ENCODE measurements at regions of chr22 and their contacts with region 1.

Region 1: DNA sequence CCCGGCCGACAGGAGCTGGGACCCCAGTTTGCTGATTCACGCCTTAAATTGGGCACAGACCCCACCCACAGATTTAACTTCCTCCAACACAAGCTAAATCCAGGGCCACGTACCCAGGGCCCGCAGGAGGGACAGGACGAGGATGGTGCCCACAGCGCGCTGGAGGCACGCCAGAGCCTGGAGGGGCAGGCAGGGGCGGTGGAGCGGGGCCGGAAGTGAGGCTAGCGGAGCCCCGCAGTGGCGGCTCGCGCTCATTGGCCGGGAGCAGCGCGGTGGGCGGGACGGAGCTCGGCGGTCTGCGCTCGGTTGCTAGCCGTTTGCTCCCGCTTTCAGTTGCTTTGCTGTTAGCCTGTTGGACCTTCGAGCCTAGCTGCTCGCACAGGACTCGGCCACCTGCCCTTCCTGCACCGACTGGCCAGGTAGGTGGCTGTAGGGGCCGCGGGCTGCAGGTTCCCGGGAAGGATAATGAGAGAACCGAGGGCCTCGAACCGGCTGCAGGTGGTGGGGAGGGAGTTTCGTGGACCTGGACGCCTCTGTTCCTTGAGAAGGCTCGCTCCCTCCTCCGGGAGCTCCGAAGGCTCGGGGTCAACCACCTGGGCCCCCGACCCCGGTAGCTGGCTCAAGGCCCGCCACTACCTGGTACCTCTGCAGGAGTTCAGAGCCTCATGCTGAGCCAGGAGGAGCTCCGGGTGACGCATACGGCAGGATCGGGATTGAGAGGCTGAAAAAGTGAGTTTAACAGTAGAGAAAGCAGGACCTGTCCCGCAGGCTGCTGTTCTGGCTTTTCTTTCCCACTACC is at the start of gene CCDC134:
- DNase-seq: peak; percentile 93
- ATAC-seq: peak; percentile 98
- H3K4me3 Mint-ChIP-seq: peak within 1 kb of the TSS; percentile 89
- H3K27ac Mint-ChIP-seq: peak within 1 kb of the TSS; percentile 93
- H3K4me1 Mint-ChIP-seq: peaks cover 30% of the 10 kb centered on the region
- H3K27me3 Mint-ChIP-seq: no peaks in the 10 kb centered on the region
- CTCF ChIP-seq: no peak
- total RNA-seq, gene CCDC134: 15.2 to 15.9 TPM

Region 2: DNA sequence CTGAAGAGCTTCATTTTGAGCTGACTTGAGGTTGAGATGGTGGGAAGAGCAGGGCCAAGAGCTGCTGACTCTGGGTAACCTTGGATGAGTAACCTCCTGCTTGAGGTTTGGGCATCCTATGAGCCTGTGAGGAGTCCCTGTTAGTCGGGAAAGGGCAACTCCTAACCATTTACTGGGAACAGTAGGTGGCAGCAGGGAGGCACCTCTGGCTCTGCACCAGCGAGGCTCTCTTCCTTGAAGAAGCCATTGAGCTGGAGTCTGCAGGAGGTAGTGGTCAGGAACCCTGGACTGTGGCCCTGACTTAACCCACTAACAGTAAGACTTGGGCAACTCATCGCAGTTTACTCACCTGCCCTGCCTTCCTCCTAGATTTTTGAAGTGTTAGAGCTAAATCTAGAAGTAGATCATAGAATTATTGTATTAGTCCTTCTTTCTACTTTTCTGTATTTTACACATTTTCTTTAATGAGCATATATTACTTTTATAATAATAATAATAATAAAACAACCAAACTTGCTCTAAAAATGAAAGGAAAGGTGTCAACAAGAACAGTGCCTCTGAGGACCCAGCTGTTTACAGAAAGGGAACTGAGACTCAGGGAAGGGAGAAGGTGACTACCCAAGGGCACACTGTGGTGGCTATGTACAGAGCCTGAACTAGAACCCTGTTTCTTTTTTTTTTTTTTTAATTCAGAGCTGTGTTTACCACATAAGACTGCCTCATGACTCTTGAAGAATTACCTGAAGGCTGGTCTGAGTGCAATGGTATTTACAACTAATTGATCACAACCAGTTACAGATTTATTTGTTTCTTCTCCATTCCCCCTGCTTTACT is 53.8 kb before region 1 on chr22:
- CTCF ChIA-PET with region 1: interaction called, 22 read pairs
- POLR2A ChIA-PET with region 1: interaction called, 6 read pairs
- intact Hi-C with region 1: no loop called
- DNase-seq: peak; percentile 63
- ATAC-seq: peak; percentile 89
- H3K4me3 Mint-ChIP-seq: no peak overlapping the region
- H3K27ac Mint-ChIP-seq: no peak overlapping the region
- H3K4me1 Mint-ChIP-seq: peaks cover 6% of the 10 kb centered on the region
- H3K27me3 Mint-ChIP-seq: peaks cover 4% of the 10 kb centered on the region
- CTCF ChIP-seq: peak; percentile 54

Region 3: DNA sequence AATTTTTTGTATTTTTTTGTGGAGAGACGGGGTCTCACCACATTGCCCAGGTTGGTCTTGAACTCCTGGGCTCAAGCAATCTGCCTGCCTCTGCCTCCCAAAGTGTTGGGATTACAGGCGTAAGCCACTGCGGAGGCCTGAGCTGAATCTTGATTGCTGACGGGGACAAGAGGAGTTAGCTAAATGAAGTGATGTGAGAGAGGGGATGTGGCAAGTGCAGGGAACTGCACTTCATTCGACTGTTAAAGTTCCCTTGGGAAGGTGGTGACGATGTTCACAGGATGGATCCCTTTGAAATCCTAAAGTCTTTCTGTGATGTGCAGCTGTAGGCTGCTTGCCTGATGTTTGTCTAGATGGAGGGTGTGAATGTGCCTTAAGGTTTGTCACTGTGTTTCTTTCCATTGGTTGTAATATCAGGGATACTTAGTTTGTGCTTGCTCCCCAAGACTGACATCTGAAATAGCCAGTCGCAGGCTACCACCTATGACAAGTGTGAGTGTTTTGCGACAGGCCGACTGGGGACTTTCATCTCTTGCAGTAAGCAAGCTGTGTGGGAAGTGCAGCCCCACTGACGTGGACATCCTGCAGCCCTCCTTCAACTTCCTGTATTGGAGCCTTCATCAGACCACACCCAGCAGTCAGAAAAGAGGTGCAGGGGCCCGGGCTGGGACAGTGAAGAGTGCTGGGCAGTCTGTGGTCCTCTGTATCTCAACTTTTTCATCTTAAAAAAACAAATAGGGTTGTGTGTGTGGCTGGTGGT is 19.6 kb before region 1 on chr22:
- CTCF ChIA-PET with region 1: interaction called, 30 read pairs
- POLR2A ChIA-PET with region 1: interaction called, 85 read pairs
- intact Hi-C with region 1: no loop called
- DNase-seq: peak; percentile 98
- ATAC-seq: peak; percentile 94
- H3K4me3 Mint-ChIP-seq: peak overlapping the region; percentile 81
- H3K27ac Mint-ChIP-seq: peak overlapping the region; percentile 99
- H3K4me1 Mint-ChIP-seq: peaks cover 39% of the 10 kb centered on the region
- H3K27me3 Mint-ChIP-seq: no peaks in the 10 kb centered on the region
- CTCF ChIP-seq: no peak

Region 4: DNA sequence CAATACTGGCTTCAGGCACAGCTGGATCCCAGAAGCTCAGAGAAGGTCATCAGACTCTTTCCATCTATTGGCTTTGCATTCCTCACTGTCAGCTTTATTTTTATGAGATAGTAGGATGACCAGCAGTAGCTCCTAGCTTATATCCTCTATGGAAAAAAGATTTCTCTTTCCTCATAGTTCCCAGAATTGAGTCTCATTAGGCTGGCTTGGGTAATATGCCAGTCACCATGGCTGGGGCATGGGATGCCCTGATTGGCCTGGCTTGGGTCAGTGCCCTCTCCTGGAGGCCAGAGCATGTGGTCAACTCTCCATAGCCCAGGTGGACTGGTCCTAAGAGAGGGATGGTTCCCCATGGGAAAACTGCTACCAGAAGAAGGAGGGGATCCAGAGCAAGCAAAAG is 14.1 kb before region 1 on chr22:
- CTCF ChIA-PET with region 1: interaction called, 30 read pairs
- POLR2A ChIA-PET with region 1: interaction called, 85 read pairs
- intact Hi-C with region 1: no loop called
- DNase-seq: no peak
- ATAC-seq: no peak
- H3K4me3 Mint-ChIP-seq: no peak overlapping the region
- H3K27ac Mint-ChIP-seq: no peak overlapping the region
- H3K4me1 Mint-ChIP-seq: peaks cover 25% of the 10 kb centered on the region
- H3K27me3 Mint-ChIP-seq: no peaks in the 10 kb centered on the region
- CTCF ChIP-seq: no peak

Region 5: GRCh38 chr22:41841085-41841659 is 40.6 kb after region 1 on chr22:
- CTCF ChIA-PET with region 1: no interaction called
- POLR2A ChIA-PET with region 1: no interaction called
- intact Hi-C with region 1: no loop called
- DNase-seq: no peak
- ATAC-seq: no peak
- H3K4me3 Mint-ChIP-seq: no peak overlapping the region
- H3K27ac Mint-ChIP-seq: no peak overlapping the region
- H3K4me1 Mint-ChIP-seq: peaks cover 70% of the 10 kb centered on the region
- H3K27me3 Mint-ChIP-seq: no peaks in the 10 kb centered on the region
- CTCF ChIP-seq: no peak

Region 6: DNA sequence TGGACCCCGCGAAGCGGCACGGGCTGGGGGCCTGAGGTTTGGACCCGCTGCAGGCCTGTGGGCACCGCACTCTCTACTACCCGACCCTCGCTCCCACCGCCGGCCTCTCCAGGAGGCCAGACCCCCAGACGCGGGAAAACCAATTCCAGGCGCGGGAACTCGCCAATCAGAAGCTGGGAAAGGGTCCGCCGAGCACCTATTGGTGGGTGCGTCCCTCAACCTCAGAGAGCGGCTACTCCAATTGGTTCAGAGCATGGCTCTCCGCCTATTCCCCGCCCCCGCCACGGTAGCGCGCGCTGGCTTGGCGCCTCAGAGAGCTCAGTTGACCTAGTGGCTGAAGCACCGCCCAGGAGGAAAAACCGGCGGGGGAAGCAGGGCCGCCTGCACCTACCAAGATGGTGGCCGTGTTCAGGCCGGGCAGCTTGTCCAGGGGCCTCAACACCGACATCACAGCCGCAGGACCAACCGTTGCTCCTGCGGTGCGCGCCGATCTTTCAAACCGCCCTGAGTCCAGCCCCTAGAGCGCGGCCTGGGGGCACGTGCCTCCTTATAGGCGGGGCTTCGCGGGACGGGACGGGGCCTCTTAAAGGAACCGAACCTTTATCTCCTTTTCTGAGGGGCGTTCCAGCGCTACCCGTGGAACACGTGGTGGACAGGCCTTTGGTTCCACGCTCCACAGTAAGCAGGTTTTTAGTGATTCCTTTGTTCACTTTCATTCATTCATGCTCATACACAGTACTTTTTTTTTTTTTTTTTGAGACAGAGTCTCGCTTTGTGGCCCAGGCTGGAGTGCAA is 146.3 kb after region 1 on chr22 and contains the start of gene CENPM:
- CTCF ChIA-PET with region 1: no interaction called
- POLR2A ChIA-PET with region 1: interaction called, 13 read pairs
- intact Hi-C with region 1: no loop called
- DNase-seq: peak; percentile 98
- ATAC-seq: peak; percentile 97
- H3K4me3 Mint-ChIP-seq: peak within 1 kb of the TSS; percentile 88
- H3K27ac Mint-ChIP-seq: peak within 1 kb of the TSS; percentile 94
- H3K4me1 Mint-ChIP-seq: peaks cover 41% of the 10 kb centered on the region
- H3K27me3 Mint-ChIP-seq: no peaks in the 10 kb centered on the region
- CTCF ChIP-seq: peak; percentile 10
- total RNA-seq, gene CENPM: 62.5 to 63.1 TPM

Measured in activated CD8-positive, alpha-beta T cell treated with anti-CD3 and anti-CD28 coated beads for 36 hours (primary cell).